Ovary (tissue), 10 donors: ENCODE measurements at regions of chr3 and their contacts with region 1.

Region 1: DNA sequence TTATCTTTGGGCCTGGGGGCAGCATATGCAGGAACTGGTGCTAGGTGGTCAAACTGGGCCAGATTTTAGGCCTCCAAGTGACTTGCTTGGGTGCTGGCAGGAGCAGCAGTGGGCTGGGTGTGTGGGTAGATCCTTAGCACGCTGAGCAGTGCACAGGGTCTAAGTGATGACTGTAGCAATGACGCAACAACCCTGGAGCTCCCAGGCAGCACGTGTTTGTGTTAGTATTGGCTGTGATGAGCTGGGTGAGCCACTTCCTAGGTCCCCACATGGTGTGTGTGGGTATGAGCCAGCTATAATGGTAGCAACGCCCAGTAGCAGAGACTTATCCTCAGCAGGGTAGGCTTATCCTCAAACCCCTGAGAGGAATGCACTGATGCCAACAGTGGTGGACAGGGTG is 570.6 kb upstream of the ROBO1 start:
- DNase-seq: no peak
- H3K4me3 ChIP-seq: no peak overlapping the region
- H3K27ac ChIP-seq: no peak overlapping the region
- H3K4me1 ChIP-seq: no peaks in the 10 kb centered on the region
- H3K27me3 ChIP-seq: no peaks in the 10 kb centered on the region
- CTCF ChIP-seq: no peak
- EP300 ChIP-seq: no peak
- POLR2A ChIP-seq: no peak

Region 2: DNA sequence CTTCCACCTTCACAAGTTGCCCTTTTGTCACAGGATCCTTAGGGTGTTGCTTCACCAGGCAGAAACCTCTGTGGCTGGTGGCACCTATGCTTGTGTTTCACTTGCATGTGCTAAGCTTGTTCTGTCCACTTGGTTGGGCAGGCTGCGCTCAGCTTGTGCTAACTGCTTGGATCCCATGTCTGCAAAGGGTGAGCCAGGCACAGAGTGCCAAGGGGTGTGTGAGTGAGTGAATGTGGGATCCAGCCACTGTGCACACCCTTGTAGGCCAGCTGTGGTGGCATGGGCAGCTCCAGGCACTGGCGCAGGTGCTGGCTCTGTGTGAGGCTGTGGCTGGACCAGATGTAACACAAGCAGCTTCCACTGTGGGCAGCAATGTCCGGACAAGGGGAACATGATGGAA is 158.1 kb after region 1 on chr3:
- intact Hi-C with region 1: no loop called
- DNase-seq: no peak
- H3K4me3 ChIP-seq: no peak overlapping the region
- H3K27ac ChIP-seq: no peak overlapping the region
- H3K4me1 ChIP-seq: no peaks in the 10 kb centered on the region
- H3K27me3 ChIP-seq: no peaks in the 10 kb centered on the region
- CTCF ChIP-seq: no peak
- EP300 ChIP-seq: no peak
- POLR2A ChIP-seq: no peak

Region 3: GRCh38 chr3:80655216-80655615 is 316.9 kb after region 1 on chr3:
- intact Hi-C with region 1: no loop called
- DNase-seq: no peak
- H3K4me3 ChIP-seq: no peak overlapping the region
- H3K27ac ChIP-seq: no peak overlapping the region
- H3K4me1 ChIP-seq: no peaks in the 10 kb centered on the region
- H3K27me3 ChIP-seq: no peaks in the 10 kb centered on the region
- CTCF ChIP-seq: no peak
- EP300 ChIP-seq: no peak
- POLR2A ChIP-seq: no peak

Region 4: GRCh38 chr3:82030916-82031315 is 1692.5 kb after region 1 on chr3:
- intact Hi-C with region 1: loop called in 1 of 4 experiments (anchors 5 kb)
- DNase-seq: peak in 2 of 5 donors; percentile 10 to 38
- H3K4me3 ChIP-seq: no peak overlapping the region
- H3K27ac ChIP-seq: no peak overlapping the region
- H3K4me1 ChIP-seq: peaks cover 2% of the 10 kb centered on the region
- H3K27me3 ChIP-seq: no peaks in the 10 kb centered on the region
- CTCF ChIP-seq: no peak
- EP300 ChIP-seq: no peak
- POLR2A ChIP-seq: no peak